ENCODE measurements at regions of chr17 and their contacts with region 1.

Region 1: GRCh38 chr17:78360371-78361224 is 721 bp upstream of the SOCS3 start:
- DNase-seq: peak; percentile 73 to 98 (median 83)
- ATAC-seq: peak; percentile 42
- H3K4me3 ChIP-seq: peak overlapping the region; percentile 47
- H3K4me3 Mint-ChIP-seq: peak overlapping the region; percentile 83 to 93 (median 88)
- H3K27ac ChIP-seq: peak overlapping the region; percentile 99
- H3K27ac Mint-ChIP-seq: peak overlapping the region; percentile 54 to 97 (median 93)
- H3K4me1 ChIP-seq: peaks cover 25 to 28% of the 10 kb centered on the region in 2 donors
- H3K4me1 Mint-ChIP-seq: peaks cover 13 to 46% (median 27%) of the 10 kb centered on the region in 7 donors
- H3K27me3 ChIP-seq: no peaks in the 10 kb centered on the region
- H3K27me3 Mint-ChIP-seq: peaks cover 0 to 2% (median 0%) of the 10 kb centered on the region in 5 donors

Region 2: DNA sequence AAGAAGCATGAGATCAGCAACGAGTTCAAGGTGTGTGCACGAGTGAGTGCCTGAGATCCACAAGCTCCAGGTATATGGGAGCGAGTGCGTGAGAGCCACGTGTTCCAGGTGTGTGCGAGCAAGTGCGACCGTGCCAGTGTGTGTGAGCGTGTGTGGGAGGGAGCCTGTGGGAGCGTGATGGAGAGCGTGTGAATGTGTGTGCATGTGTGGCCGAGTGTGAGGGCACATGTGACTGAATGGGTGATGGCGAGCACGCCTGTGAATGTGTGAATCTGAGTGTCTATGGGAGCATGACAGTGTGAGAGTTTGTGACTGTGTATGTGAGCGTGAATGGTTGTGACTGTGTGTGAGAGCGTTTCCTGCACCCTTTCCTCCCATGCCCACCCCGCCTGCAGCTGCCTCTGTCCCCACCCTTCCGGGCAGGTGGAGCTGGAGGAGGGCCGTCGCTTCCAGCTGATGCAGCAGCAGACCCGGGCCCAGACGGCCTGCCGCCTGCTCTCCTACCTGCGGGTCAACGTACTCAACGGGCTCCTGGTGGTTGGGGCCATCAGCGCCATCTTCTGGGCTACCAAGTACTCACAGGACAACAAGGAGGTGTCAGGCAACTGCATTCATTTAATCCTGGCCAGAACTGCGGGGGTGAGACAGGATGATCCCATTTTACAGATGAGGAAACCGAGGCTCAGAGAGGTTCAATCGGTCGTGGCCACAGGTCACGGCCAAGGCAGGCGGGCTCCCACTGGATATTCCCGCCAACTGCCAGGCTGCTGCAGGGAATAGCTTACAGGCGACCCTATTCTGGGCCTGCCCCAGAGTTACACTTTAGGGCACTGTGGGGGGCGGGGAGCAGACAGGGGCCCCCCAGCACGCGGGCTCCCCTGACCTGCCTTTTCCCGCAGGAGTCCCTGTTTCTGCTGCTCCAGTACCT is 226.4 kb before region 1 on chr17:
- CTCF ChIA-PET with region 1: no interaction called
- POLR2A ChIA-PET with region 1: no interaction called
- intact Hi-C with region 1: loop called (anchors 5 kb)
- DNase-seq: peak in 8 of 9 donors; percentile 72 to 89 (median 84)
- ATAC-seq: peak; percentile 58
- H3K4me3 ChIP-seq: peak overlapping the region; percentile 95
- H3K4me3 Mint-ChIP-seq: peak overlapping the region; percentile 81 to 99 (median 92)
- H3K27ac ChIP-seq: peak overlapping the region; percentile 77
- H3K27ac Mint-ChIP-seq: peak overlapping the region; percentile 68 to 95 (median 87)
- H3K4me1 ChIP-seq: peaks cover 56 to 66% of the 10 kb centered on the region in 2 donors
- H3K4me1 Mint-ChIP-seq: peaks cover 55 to 73% (median 66%) of the 10 kb centered on the region in 7 donors
- H3K27me3 ChIP-seq: no peaks in the 10 kb centered on the region
- H3K27me3 Mint-ChIP-seq: peaks cover 0 to 3% (median 0%) of the 10 kb centered on the region in 5 donors

Region 3: GRCh38 chr17:78186692-78187595 is 173.7 kb before region 1 on chr17 and contains the starts of genes AFMID and TK1:
- CTCF ChIA-PET with region 1: no interaction called
- POLR2A ChIA-PET with region 1: no interaction called
- intact Hi-C with region 1: no loop called
- DNase-seq: peak; percentile 33 to 96 (median 56)
- ATAC-seq: peak; percentile 95
- H3K4me3 ChIP-seq: peak within 1 kb of the TSS; percentile 62
- H3K4me3 Mint-ChIP-seq: peak within 1 kb of the TSS; percentile 75 to 91 (median 85)
- H3K27ac ChIP-seq: no peak within 1 kb of the TSS
- H3K27ac Mint-ChIP-seq: peak within 1 kb of the TSS in 8 of 9 donors; percentile 14 to 81 (median 63)
- H3K4me1 ChIP-seq: peaks cover 0 to 5% of the 10 kb centered on the region in 2 donors
- H3K4me1 Mint-ChIP-seq: peaks cover 0 to 39% (median 13%) of the 10 kb centered on the region in 7 donors
- H3K27me3 ChIP-seq: no peaks in the 10 kb centered on the region
- H3K27me3 Mint-ChIP-seq: no peaks in the 10 kb centered on the region
- total RNA-seq, gene AFMID: 1.2 to 19.2 (median 3.0) TPM
- total RNA-seq, gene TK1: 0.29 to 57.7 (median 1.0) TPM in 3 of 5 experiments, not detected in the others

Region 4: DNA sequence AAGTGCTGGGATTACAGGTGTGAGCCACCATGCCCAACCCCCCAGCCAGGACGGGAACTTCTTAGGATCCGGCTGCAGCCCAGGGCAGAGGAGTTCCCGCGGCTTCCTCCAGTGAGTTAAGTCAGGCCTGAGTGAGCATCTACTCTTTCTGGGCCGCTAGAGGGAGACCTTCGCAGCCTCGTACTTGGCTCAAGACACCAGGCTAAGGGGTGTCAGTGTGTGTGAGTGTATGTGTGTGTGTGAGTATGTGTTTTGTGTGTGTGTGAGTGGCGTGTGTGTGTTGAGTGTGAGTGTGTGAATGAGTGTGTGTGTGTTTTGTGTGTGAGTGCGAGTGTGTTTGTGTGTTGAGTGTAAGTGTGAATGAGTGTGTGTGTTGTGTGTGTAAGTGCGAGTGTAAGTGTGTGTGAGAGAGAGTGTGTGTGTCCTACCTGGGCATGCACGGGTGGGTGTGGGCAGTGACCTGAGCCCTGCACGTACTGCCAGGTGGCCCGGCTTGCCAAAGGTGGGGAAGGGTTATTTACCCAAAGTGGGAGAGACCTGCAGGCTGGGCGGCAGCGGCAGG is 70.7 kb before region 1 on chr17:
- CTCF ChIA-PET with region 1: interaction called, 6 read pairs
- POLR2A ChIA-PET with region 1: no interaction called
- intact Hi-C with region 1: loop called (anchors 1 kb)
- DNase-seq: peak; percentile 41 to 82 (median 71)
- ATAC-seq: peak; percentile 97
- H3K4me3 ChIP-seq: no peak overlapping the region
- H3K4me3 Mint-ChIP-seq: no peak overlapping the region
- H3K27ac ChIP-seq: no peak overlapping the region
- H3K27ac Mint-ChIP-seq: no peak overlapping the region
- H3K4me1 ChIP-seq: peaks cover 4 to 8% of the 10 kb centered on the region in 2 donors
- H3K4me1 Mint-ChIP-seq: peaks cover 0 to 10% (median 5%) of the 10 kb centered on the region in 7 donors
- H3K27me3 ChIP-seq: no peaks in the 10 kb centered on the region
- H3K27me3 Mint-ChIP-seq: no peaks in the 10 kb centered on the region

Region 5: DNA sequence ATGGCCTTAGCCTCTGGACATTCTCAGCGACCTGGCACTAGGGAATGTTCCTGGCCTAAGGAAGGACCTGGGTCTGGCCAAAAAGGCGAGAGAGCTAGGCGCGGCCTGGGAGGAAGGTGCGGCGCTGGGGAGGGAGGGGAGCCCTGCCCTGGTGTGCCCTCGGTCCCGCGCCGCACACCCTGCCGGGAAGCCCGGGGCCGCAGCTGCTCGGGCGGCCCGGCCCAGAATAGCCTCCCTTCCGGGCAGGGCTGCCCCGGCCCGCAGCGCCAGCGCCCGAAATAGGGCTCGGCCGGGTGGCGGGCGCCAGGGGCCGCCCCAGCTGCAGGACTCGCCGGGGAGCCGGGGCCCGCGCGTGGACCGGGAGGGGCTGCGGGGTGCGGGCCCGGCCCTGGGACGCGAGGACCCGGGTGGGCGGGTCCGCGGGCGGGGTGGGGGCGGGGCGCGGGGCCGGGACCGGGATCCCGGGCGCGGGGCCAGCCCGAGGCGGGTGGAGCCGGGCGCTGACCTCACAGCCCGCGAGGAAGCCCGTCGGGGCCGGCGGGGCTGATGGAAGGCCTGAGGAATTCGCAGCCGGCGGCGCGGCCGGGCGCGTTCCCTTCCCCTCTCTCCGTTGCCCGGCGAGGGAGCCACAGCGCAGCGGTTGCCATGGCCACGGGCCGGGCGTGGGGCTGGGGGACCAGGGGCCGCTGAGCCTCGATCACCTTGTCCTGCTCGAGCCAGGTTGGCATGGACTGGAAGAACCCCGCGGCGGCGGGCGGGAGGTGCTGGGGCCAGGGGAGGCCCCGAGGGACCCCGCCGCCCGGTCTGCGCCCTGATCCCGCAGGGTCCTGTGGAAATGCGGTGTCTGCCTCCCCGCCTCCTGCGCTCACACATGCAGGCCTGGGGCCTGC is 18.8 kb before region 1 on chr17:
- CTCF ChIA-PET with region 1: interaction called, 11 read pairs
- POLR2A ChIA-PET with region 1: no interaction called
- intact Hi-C with region 1: loop called (anchors 1 kb)
- DNase-seq: peak in 2 of 9 donors; percentile 28 to 48
- ATAC-seq: peak; percentile 15
- H3K4me3 ChIP-seq: peak overlapping the region; percentile 24
- H3K4me3 Mint-ChIP-seq: peak overlapping the region in 8 of 10 donors; percentile 53 to 85 (median 72)
- H3K27ac ChIP-seq: peak overlapping the region; percentile 82
- H3K27ac Mint-ChIP-seq: peak overlapping the region in 5 of 9 donors; percentile 32 to 98 (median 97)
- H3K4me1 ChIP-seq: peaks cover 43 to 67% of the 10 kb centered on the region in 2 donors
- H3K4me1 Mint-ChIP-seq: peaks cover 54 to 75% (median 62%) of the 10 kb centered on the region in 7 donors
- H3K27me3 ChIP-seq: no peaks in the 10 kb centered on the region
- H3K27me3 Mint-ChIP-seq: peaks cover 0 to 15% (median 0%) of the 10 kb centered on the region in 5 donors

Region 6: DNA sequence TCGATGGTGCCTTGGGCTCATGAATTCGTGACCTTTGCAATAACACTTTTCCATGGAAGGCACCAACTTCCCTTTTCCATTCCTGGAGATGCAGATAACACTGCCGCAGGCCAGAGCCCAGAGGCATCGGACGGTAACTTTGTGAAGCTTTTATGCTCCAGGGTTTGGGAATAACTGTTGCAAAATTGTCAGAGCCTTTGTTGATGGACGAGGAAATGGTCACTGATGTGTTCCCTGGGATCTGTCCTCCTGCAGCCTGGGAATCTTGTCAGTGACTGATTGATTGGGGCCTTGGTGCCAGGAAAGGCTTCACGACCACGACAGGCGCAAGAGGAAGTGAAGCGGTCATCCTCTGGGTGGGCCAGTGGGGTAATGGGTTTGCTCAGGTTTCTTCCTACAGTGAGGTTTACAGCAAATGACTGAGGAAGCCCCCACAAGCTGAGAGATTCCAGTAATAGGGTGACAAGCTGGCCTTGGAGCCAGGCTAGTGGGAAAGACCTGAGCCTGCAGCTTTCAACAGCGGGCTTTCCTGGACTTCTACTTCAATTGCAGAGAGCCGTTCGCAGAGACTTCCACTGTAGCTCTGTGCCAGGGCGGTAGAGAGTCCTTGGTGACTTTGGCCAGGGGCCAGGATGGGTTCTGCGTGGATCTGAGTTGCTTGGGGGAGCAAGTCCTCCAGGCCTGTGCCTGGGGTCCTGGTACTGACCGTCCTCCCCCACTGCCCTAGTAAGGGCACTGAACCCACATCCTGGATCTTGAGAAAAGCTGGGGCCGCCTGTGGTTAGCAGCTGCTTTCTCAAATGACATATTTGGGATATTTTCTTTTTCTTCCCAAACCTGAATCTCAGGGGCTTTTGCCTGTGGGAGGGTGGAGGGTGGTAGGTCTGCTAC is 55.5 kb after region 1 on chr17:
- CTCF ChIA-PET with region 1: interaction called, 5 read pairs
- POLR2A ChIA-PET with region 1: interaction called, 3 read pairs
- intact Hi-C with region 1: loop called in 1 of 2 experiments (anchors 2 kb)
- DNase-seq: no peak
- ATAC-seq: no peak
- H3K4me3 ChIP-seq: no peak overlapping the region
- H3K4me3 Mint-ChIP-seq: peak overlapping the region in 4 of 10 donors; percentile 38 to 84 (median 75)
- H3K27ac ChIP-seq: peak overlapping the region; percentile 75
- H3K27ac Mint-ChIP-seq: peak overlapping the region; percentile 16 to 97 (median 91)
- H3K4me1 ChIP-seq: peaks cover 24 to 41% of the 10 kb centered on the region in 2 donors
- H3K4me1 Mint-ChIP-seq: peaks cover 49 to 83% (median 55%) of the 10 kb centered on the region in 7 donors
- H3K27me3 ChIP-seq: no peaks in the 10 kb centered on the region
- H3K27me3 Mint-ChIP-seq: no peaks in the 10 kb centered on the region

Region 7: DNA sequence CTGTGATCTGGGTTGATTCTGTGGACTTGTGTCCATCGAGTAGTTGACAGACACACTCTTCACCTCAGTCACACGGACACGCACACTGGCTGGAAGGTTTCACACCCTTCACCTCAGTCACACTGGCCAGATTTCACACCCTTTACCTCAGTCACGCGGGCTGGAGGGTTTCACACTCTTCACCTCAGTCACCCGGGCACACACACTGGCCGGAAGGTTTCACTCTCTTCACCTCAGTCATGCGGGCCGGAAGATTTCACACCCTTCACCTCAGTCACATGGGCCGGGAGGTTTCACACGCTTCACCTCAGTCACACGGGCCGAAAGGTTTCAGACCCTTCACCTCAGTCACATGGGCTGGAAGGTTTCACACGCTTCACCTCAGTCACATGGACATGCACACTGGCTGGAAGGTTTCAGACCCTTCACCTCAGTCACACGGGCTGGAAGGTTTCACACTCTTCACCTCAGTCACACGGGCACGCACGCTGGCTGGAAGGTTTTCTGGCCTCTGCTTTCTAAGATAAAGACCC is 114.1 kb after region 1 on chr17:
- CTCF ChIA-PET with region 1: no interaction called
- POLR2A ChIA-PET with region 1: no interaction called
- intact Hi-C with region 1: no loop called
- DNase-seq: no peak
- ATAC-seq: peak; percentile 76
- H3K4me3 ChIP-seq: no peak overlapping the region
- H3K4me3 Mint-ChIP-seq: no peak overlapping the region
- H3K27ac ChIP-seq: no peak overlapping the region
- H3K27ac Mint-ChIP-seq: peak overlapping the region in 2 of 9 donors; percentile 28 to 71
- H3K4me1 ChIP-seq: peaks cover 0 to 8% of the 10 kb centered on the region in 2 donors
- H3K4me1 Mint-ChIP-seq: peaks cover 0 to 6% (median 0%) of the 10 kb centered on the region in 7 donors
- H3K27me3 ChIP-seq: no peaks in the 10 kb centered on the region
- H3K27me3 Mint-ChIP-seq: peaks cover 0 to 5% (median 0%) of the 10 kb centered on the region in 5 donors

Region 8: GRCh38 chr17:78526231-78527025 is 165.8 kb after region 1 on chr17:
- CTCF ChIA-PET with region 1: no interaction called
- POLR2A ChIA-PET with region 1: no interaction called
- intact Hi-C with region 1: no loop called
- DNase-seq: no peak
- ATAC-seq: no peak
- H3K4me3 ChIP-seq: no peak overlapping the region
- H3K4me3 Mint-ChIP-seq: no peak overlapping the region
- H3K27ac ChIP-seq: no peak overlapping the region
- H3K27ac Mint-ChIP-seq: peak overlapping the region in 1 of 9 donors; percentile 36
- H3K4me1 ChIP-seq: no peaks in the 10 kb centered on the region
- H3K4me1 Mint-ChIP-seq: no peaks in the 10 kb centered on the region
- H3K27me3 ChIP-seq: no peaks in the 10 kb centered on the region
- H3K27me3 Mint-ChIP-seq: peaks cover 0 to 8% (median 0%) of the 10 kb centered on the region in 5 donors

Region 9: GRCh38 chr17:78745407-78746088 is 384.9 kb after region 1 on chr17:
- CTCF ChIA-PET with region 1: no interaction called
- POLR2A ChIA-PET with region 1: no interaction called
- intact Hi-C with region 1: loop called in 1 of 2 experiments (anchors 5 kb)
- DNase-seq: peak in 7 of 9 donors; percentile 48 to 67 (median 56)
- ATAC-seq: peak; percentile 13
- H3K4me3 ChIP-seq: peak overlapping the region; percentile 6
- H3K4me3 Mint-ChIP-seq: peak overlapping the region; percentile 53 to 93 (median 86)
- H3K27ac ChIP-seq: peak overlapping the region; percentile 81
- H3K27ac Mint-ChIP-seq: peak overlapping the region; percentile 62 to 98 (median 95)
- H3K4me1 ChIP-seq: peaks cover 92 to 94% of the 10 kb centered on the region in 2 donors
- H3K4me1 Mint-ChIP-seq: peaks cover 77 to 100% (median 93%) of the 10 kb centered on the region in 7 donors
- H3K27me3 ChIP-seq: no peaks in the 10 kb centered on the region
- H3K27me3 Mint-ChIP-seq: no peaks in the 10 kb centered on the region

Measured in naive thymus-derived CD4-positive, alpha-beta T cell (primary cell).